Gastrocnemius medialis (tissue), 4 donors: ENCODE measurements at regions of chr15 and their contacts with region 1.

Region 1: DNA sequence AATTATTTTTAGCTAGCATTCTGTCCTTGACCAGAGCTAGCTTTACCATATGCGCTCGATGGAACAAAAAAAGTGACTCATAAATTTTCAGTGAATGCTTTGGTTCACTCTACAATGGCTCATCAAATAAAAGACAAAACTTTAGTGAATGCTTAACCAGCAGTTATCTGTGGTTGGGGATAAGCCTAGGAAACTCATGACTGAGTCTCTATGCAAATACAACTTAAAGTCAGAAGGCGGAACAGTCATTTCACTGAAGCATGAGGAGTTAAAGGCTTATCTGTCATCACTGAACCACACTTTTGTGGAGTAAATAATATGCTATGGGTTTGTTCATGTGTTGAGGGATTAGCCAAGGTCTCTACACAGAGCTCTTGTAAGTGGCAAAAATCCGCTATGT is 308.4 kb downstream of the SQOR start:
- DNase-seq: no peak
- ATAC-seq: no peak
- H3K4me3 ChIP-seq: no peak overlapping the region
- H3K27ac ChIP-seq: no peak overlapping the region
- H3K4me1 ChIP-seq: no peaks in the 10 kb centered on the region
- H3K27me3 ChIP-seq: no peaks in the 10 kb centered on the region
- CTCF ChIP-seq: no peak
- POLR2A ChIP-seq: no peak

Region 2: DNA sequence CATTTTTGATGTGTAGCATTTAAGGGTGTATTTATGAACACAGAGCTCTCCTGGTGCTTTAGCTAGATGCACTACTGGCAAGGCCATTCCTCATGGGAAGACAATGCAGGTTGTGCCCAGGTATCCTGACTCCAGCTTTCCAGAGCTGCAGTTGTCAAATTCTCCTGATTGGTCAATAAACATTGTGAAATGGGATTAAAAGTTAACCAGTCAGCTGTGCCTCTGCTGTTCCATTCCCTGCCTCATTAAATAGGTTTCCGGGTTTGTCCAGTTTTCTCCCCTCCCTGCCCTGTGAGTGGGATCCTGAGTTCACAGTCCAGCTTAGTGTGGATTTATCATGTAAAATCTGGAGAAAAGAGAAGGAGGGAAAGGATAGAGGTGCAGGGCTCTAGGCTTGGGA is 101.1 kb before region 1 on chr15:
- in situ Hi-C with region 1: no loop called
- intact Hi-C with region 1: no loop called
- DNase-seq: no peak
- ATAC-seq: no peak
- H3K4me3 ChIP-seq: no peak overlapping the region
- H3K27ac ChIP-seq: no peak overlapping the region
- H3K4me1 ChIP-seq: no peaks in the 10 kb centered on the region
- H3K27me3 ChIP-seq: peaks cover 0 to 2% (median 0%) of the 10 kb centered on the region in 3 donors
- CTCF ChIP-seq: no peak
- POLR2A ChIP-seq: no peak

Region 3: DNA sequence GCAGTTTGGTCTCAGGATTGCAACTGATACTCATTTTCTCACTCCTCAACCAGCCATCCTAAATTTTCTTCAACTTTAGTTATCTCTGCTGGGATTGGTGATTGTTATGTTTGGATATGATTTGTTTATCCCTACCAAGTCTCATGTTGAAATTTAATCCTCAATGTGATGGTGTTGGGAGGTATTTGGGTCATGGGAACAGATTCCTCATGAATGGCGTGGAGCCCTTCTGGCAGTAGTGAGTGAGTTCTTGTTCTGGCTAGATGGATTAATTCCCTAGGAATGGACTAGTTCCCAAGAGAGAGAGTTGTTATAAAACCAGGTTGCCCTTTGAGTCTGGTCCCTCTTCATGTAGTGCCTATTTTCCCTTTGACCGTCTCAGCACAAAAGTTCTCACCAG is 91.5 kb after region 1 on chr15:
- in situ Hi-C with region 1: loop called in 1 of 4 experiments (anchors 25 kb)
- intact Hi-C with region 1: no loop called
- DNase-seq: no peak
- ATAC-seq: peak in 1 of 2 donors; percentile 66
- H3K4me3 ChIP-seq: no peak overlapping the region
- H3K27ac ChIP-seq: no peak overlapping the region
- H3K4me1 ChIP-seq: no peaks in the 10 kb centered on the region
- H3K27me3 ChIP-seq: no peaks in the 10 kb centered on the region
- CTCF ChIP-seq: no peak
- POLR2A ChIP-seq: no peak